ENCODE measurements at regions of chr1 and their contacts with region 1.

Region 1: DNA sequence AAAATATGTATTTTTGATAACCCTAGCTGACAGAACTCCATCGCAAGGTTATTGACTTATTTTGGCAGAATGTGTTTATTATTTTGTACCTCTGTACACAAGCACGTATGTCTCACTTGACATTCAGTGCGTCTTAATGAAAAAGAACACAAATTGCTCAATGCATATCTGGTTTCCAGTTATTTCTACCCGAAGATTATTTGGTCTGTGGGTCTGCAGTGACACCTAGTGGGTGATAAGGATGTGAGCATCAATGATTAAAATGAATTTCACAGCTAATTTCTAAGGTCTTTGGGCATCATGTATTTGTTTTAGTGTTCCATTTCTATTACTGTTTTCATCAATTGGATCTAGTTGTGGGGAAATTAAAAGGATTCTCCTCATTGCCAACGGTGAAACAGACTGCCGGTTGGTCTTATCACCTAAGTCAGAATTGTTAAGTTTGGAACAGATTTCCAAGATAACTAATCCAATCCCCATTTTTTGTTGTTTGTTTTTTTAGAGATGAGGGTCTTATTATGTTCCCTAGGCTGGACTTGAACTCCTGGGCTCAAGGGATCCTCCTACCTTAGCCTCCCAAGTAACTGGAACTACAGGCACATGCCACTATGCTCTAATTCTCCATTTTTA is 13.9 kb downstream of the DDX20 start:
- DNase-seq: no peak
- H3K4me3 ChIP-seq: no peak overlapping the region
- H3K27ac ChIP-seq: peak overlapping the region; percentile 1
- H3K4me1 ChIP-seq: no peaks in the 10 kb centered on the region
- H3K27me3 ChIP-seq: no peaks in the 10 kb centered on the region
- CTCF ChIP-seq: peak; percentile 55 to 87 (median 83)
- POLR2A ChIP-seq: no peak

Region 2: DNA sequence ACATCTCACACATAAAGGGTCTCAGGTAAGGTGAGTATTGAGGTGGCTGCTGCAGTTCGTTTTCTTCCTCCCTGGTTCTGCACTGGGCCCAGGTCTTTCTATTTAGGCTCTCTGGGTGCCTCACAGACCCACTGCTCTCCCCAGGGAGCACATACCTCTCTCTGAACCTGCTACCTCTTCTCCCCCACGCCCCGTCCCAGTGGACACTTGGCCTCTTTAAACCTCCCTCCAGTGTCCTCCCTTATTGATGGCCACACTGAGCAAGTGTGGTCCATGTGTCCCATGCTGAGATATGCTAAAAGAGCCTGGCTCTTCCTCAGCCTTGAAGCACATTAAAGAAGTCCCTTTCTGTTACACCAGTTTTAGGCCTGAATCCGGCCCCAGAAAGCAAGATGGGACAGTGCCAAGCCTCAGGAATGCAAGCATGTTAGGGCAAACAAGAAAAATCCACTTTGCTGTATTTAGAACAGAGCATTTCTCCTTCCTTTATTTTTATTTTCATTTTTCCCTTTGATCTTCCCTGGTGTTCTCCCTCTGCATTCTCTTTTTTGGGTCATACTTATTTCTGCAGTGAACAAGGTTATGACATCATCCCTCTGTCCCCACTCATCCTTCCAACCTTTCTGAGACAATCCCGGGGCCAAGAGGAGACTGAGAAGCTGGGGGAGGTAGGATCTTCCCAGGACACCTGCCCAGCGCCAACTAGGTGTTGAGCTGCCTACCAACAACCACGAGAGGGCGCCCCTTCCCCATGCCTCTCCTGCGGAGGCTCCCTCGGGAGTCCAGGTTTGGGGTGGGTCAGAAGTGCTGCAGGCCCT is 547.1 kb before region 1 on chr1:
- intact Hi-C with region 1: loop called (anchors 5 kb)
- DNase-seq: no peak
- H3K4me3 ChIP-seq: no peak overlapping the region
- H3K27ac ChIP-seq: peak overlapping the region; percentile 10
- H3K4me1 ChIP-seq: peaks cover 10% of the 10 kb centered on the region
- H3K27me3 ChIP-seq: no peaks in the 10 kb centered on the region
- CTCF ChIP-seq: peak; percentile 75 to 96 (median 87)
- POLR2A ChIP-seq: no peak

Region 3: DNA sequence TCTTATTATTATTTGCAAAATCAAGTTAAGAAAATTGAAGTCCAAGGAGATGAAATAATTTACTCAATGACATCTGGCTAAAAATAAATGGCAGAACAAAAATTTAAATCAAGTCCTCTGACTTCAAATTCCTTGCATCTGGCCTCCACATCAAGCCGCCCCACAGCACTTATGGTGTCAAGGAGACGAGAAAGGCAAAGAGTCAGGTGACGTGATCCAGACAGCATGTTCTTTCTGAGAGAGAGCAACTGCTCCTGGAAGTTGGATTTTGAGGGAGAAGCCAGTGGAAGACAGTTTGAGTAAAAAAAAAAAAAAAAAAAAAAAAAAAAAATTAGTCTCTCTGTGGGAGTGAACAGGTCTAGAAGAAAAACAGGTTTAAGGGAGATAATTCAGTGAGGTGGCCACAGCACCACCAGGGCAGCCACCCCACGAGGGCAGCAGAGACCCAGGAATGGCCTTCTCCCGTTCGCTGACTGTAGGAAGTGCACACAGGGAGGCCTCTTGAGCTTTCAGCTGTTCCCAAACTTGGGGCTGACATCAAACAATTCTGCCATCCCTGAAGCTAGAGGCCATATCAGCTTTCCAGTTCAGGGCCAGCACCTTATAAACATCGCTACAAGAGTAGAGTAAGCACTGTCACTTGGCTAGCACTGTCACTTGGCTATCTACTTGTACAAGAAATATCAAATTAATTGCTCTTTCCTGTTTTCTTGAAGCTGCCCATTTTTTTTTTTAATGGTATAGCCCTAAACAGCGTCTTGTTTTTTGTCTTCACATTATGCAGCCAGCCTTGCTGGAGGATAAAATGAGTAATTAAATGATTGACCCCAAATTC is 288.0 kb before region 1 on chr1:
- intact Hi-C with region 1: loop called (anchors 5 kb)
- DNase-seq: no peak
- H3K4me3 ChIP-seq: no peak overlapping the region
- H3K27ac ChIP-seq: no peak overlapping the region
- H3K4me1 ChIP-seq: no peaks in the 10 kb centered on the region
- H3K27me3 ChIP-seq: no peaks in the 10 kb centered on the region
- CTCF ChIP-seq: peak; percentile 10 to 60 (median 44)
- POLR2A ChIP-seq: no peak

Region 4: GRCh38 chr1:111656086-111657017 is 113.3 kb before region 1 on chr1:
- intact Hi-C with region 1: no loop called
- DNase-seq: no peak
- H3K4me3 ChIP-seq: no peak overlapping the region
- H3K27ac ChIP-seq: peak overlapping the region; percentile 22
- H3K4me1 ChIP-seq: peaks cover 46% of the 10 kb centered on the region
- H3K27me3 ChIP-seq: no peaks in the 10 kb centered on the region
- CTCF ChIP-seq: peak; percentile 43 to 70 (median 66)
- POLR2A ChIP-seq: no peak

Region 5: GRCh38 chr1:111719674-111720132 is 49.9 kb before region 1 on chr1:
- intact Hi-C with region 1: loop called (anchors 10 kb)
- DNase-seq: no peak
- H3K4me3 ChIP-seq: no peak overlapping the region
- H3K27ac ChIP-seq: no peak overlapping the region
- H3K4me1 ChIP-seq: peaks cover 45% of the 10 kb centered on the region
- H3K27me3 ChIP-seq: no peaks in the 10 kb centered on the region
- CTCF ChIP-seq: no peak
- POLR2A ChIP-seq: no peak

Region 6: DNA sequence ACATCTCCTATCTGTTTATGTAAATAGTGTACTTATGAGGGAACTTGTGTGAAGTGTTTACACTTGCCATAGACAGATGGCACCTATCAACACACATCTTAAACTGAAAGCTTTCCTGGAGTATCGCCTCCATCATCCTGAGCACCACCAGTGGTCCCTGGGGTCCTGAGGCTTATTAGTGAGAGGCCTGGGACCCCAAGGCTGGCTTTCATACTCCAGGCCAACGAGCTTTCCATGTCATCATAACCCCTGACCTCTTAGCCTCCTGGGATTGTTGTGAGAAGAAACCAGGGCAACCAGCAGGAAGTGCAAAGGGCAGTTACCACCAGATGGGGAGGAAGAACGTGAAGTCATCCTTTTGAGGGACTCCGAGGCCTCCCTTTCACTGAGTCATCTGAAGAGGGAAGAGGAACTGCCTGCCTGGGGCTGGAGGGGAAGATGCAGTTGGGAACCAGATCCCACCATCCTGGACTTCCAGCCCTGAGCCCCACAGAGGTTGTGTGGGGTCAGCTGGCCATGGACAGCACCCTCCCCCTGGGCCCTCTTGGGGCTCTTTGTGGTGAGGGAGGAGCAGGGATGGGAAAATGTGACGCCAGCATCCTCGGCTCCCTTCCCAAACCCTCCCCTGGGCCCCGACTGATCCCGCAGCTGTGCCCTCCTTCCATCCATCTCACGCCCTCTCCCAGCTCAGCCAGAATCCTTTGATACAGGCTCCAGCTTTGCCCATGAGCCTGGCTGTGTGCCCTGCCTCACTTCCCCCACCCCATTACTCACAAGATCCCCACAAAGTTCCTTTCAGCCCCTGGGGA is 36.2 kb before region 1 on chr1:
- intact Hi-C with region 1: no loop called
- DNase-seq: peak; percentile 82 to 90
- H3K4me3 ChIP-seq: no peak overlapping the region
- H3K27ac ChIP-seq: peak overlapping the region; percentile 44
- H3K4me1 ChIP-seq: peaks cover 64% of the 10 kb centered on the region
- H3K27me3 ChIP-seq: no peaks in the 10 kb centered on the region
- CTCF ChIP-seq: no peak
- POLR2A ChIP-seq: no peak